B cell (primary cell): ENCODE measurements at regions of chr16 and their contacts with region 1.

Region 1: GRCh38 chr16:2016407-2016922 is 3.1 kb upstream of the NPW start:
- DNase-seq: no peak
- ATAC-seq: no peak
- H3K4me3 ChIP-seq: no peak overlapping the region
- H3K4me3 Mint-ChIP-seq: no peak overlapping the region
- H3K27ac ChIP-seq: no peak overlapping the region
- H3K27ac Mint-ChIP-seq: no peak overlapping the region
- H3K4me1 ChIP-seq: peaks cover 8 to 17% of the 10 kb centered on the region in 2 donors
- H3K4me1 Mint-ChIP-seq: peaks cover 2% of the 10 kb centered on the region
- H3K27me3 ChIP-seq: peaks cover 0 to 31% (median 9%) of the 10 kb centered on the region in 4 experiments
- H3K27me3 Mint-ChIP-seq: peaks cover 15% of the 10 kb centered on the region
- CTCF ChIP-seq: peak; percentile 51

Region 2: DNA sequence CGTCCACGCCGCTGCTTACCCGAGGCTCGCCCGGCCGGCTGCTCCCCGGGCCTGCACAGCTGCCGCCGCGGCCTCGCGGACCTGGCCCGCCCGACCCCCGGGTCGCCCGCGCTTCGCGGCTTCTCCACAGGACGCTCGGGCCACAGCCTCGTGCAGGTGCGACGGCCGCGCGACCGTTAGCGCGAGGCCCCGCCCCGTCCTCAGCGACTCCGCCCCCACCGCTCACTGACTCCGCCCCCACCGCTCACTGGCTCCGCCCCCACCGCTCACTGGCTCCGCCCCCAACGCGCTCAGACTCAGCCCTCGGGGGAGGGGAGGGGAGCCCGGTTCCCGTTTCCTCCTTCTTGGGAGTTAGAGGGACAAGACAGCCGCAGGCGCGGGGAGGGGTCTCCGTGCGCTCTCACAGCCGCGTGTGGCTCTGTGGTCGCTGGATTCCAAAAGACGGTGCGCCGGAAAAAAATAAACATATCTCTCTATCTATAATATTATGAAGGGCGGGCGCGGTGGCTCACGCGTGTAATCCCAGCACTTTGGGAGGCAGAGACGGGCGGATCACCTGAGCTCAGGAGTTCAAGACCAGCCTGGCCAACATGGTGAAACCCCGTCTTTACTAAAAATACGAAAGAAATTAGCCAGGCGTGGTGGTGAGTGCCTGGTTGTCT is 144.4 kb before region 1 on chr16 and contains the start of gene MEIOB:
- CTCF ChIA-PET with region 1: no interaction called
- POLR2A ChIA-PET with region 1: no interaction called
- intact Hi-C with region 1: no loop called
- DNase-seq: peak; percentile 48
- ATAC-seq: peak; percentile 24
- H3K4me3 ChIP-seq: peak within 1 kb of the TSS in 1 of 5 experiments; percentile 14
- H3K4me3 Mint-ChIP-seq: no peak within 1 kb of the TSS
- H3K27ac ChIP-seq: no peak within 1 kb of the TSS
- H3K27ac Mint-ChIP-seq: no peak within 1 kb of the TSS
- H3K4me1 ChIP-seq: peaks cover 0 to 8% of the 10 kb centered on the region in 2 donors
- H3K4me1 Mint-ChIP-seq: no peaks in the 10 kb centered on the region
- H3K27me3 ChIP-seq: peaks cover 0 to 21% (median 5%) of the 10 kb centered on the region in 4 experiments
- H3K27me3 Mint-ChIP-seq: peaks cover 14% of the 10 kb centered on the region
- CTCF ChIP-seq: no peak
- total RNA-seq, gene MEIOB: not detected in 2 replicates

Region 3: GRCh38 chr16:1971796-1972489 is 44.5 kb before region 1 on chr16 and contains the start of gene TBL3:
- CTCF ChIA-PET with region 1: no interaction called
- POLR2A ChIA-PET with region 1: no interaction called
- intact Hi-C with region 1: no loop called
- DNase-seq: peak; percentile 98
- ATAC-seq: peak; percentile 98
- H3K4me3 ChIP-seq: peak within 1 kb of the TSS; percentile 86 to 91 (median 87)
- H3K4me3 Mint-ChIP-seq: peak within 1 kb of the TSS; percentile 96
- H3K27ac ChIP-seq: peak within 1 kb of the TSS; percentile 82 to 85
- H3K27ac Mint-ChIP-seq: peak within 1 kb of the TSS; percentile 98
- H3K4me1 ChIP-seq: peaks cover 9 to 19% of the 10 kb centered on the region in 2 donors
- H3K4me1 Mint-ChIP-seq: peaks cover 21% of the 10 kb centered on the region
- H3K27me3 ChIP-seq: peaks cover 0 to 12% (median 1%) of the 10 kb centered on the region in 4 experiments
- H3K27me3 Mint-ChIP-seq: no peaks in the 10 kb centered on the region
- CTCF ChIP-seq: no peak
- total RNA-seq, gene TBL3: 31.9 and 32.2 TPM in 2 replicates

Region 4: GRCh38 chr16:1991948-1992703 is 24.3 kb before region 1 on chr16:
- CTCF ChIA-PET with region 1: no interaction called
- POLR2A ChIA-PET with region 1: no interaction called
- intact Hi-C with region 1: no loop called
- DNase-seq: peak; percentile 96
- ATAC-seq: peak; percentile 77
- H3K4me3 ChIP-seq: peak overlapping the region in 4 of 5 experiments; percentile 51 to 93 (median 69)
- H3K4me3 Mint-ChIP-seq: peak overlapping the region; percentile 91
- H3K27ac ChIP-seq: peak overlapping the region; percentile 86 to 92
- H3K27ac Mint-ChIP-seq: peak overlapping the region; percentile 97
- H3K4me1 ChIP-seq: peaks cover 24 to 35% of the 10 kb centered on the region in 2 donors
- H3K4me1 Mint-ChIP-seq: peaks cover 33% of the 10 kb centered on the region
- H3K27me3 ChIP-seq: no peaks in the 10 kb centered on the region
- H3K27me3 Mint-ChIP-seq: no peaks in the 10 kb centered on the region
- CTCF ChIP-seq: no peak

Region 5: GRCh38 chr16:2003827-2004641 is 12.4 kb before region 1 on chr16:
- CTCF ChIA-PET with region 1: interaction called, 10 read pairs
- POLR2A ChIA-PET with region 1: interaction called, 5 read pairs
- intact Hi-C with region 1: no loop called
- DNase-seq: peak; percentile 88
- ATAC-seq: peak; percentile 99
- H3K4me3 ChIP-seq: no peak overlapping the region
- H3K4me3 Mint-ChIP-seq: no peak overlapping the region
- H3K27ac ChIP-seq: no peak overlapping the region
- H3K27ac Mint-ChIP-seq: no peak overlapping the region
- H3K4me1 ChIP-seq: peaks cover 33 to 45% of the 10 kb centered on the region in 2 donors
- H3K4me1 Mint-ChIP-seq: peaks cover 41% of the 10 kb centered on the region
- H3K27me3 ChIP-seq: no peaks in the 10 kb centered on the region
- H3K27me3 Mint-ChIP-seq: no peaks in the 10 kb centered on the region
- CTCF ChIP-seq: peak; percentile 93

Region 6: DNA sequence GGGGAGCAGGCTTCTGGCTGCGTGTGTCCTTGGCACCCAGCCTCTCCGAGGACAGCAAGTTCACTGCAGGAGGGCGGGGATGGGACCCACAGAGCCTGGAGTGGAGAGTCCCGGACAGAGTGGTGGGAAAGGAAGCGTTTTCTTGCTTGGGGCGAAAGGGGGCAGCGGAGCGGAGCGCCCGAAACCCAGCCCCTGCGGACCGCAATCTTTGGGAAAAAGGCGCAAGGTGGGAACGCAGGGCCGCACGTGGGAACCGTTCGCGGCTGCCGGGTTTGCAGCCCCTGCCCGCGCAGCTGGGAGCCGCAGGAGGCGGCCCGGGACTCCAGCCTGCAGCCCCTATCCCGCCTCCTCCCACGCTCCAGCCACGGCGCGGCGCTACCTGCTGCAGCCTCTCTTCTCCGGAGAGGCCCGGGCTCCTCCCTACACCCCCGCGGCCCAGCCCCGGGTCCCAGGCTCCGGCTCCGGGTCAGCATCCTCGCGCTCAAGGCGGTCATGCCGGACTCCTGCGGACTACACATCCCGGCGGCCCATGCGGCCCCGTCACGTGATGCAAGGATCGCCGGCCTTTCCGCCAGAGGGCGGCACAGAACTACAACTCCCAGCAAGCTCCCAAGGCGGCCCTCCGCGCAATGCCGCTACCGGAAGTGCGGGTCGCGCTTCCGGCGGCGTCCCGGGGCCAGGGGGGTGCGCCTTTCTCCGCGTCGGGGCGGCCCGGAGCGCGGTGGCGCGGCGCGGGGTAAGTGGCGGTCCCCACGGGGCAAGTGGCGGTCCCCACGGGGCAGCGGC is 31.1 kb after region 1 on chr16 and contains the starts of genes NTHL1 and TSC2:
- CTCF ChIA-PET with region 1: no interaction called
- POLR2A ChIA-PET with region 1: no interaction called
- intact Hi-C with region 1: no loop called
- DNase-seq: peak; percentile 95
- ATAC-seq: peak; percentile 97
- H3K4me3 ChIP-seq: peak within 1 kb of the TSS; percentile 27 to 79 (median 78)
- H3K4me3 Mint-ChIP-seq: peak within 1 kb of the TSS; percentile 91
- H3K27ac ChIP-seq: peak within 1 kb of the TSS in 1 of 2 donors; percentile 63
- H3K27ac Mint-ChIP-seq: peak within 1 kb of the TSS; percentile 76
- H3K4me1 ChIP-seq: peaks cover 17 to 35% of the 10 kb centered on the region in 2 donors
- H3K4me1 Mint-ChIP-seq: peaks cover 20% of the 10 kb centered on the region
- H3K27me3 ChIP-seq: no peaks in the 10 kb centered on the region
- H3K27me3 Mint-ChIP-seq: no peaks in the 10 kb centered on the region
- CTCF ChIP-seq: peak; percentile 26
- total RNA-seq, gene NTHL1: 14.1 and 17.5 TPM in 2 replicates
- total RNA-seq, gene TSC2: 188 and 194 TPM in 2 replicates

Region 7: DNA sequence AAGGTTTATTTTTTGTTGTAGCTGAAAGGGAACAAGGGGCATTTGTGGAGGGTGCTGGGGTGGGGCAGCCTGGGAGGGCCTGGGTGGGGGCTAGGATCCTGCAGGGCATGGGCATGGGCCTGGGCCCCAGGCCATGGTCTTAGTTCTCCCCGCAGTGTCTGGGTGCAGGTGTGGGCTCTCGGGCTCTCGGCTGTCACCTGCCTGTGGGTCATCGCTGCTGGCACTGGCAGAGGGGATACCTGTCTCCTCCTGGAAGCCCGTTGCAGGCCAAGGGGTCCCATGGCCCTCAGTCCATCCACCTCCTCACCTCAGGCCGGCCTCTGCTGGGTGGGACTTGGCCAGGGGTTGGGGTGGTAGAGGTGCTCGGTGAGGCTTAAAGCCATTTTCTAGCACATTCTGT is 61.6 kb after region 1 on chr16:
- CTCF ChIA-PET with region 1: no interaction called
- POLR2A ChIA-PET with region 1: interaction called, 14 read pairs
- intact Hi-C with region 1: no loop called
- DNase-seq: no peak
- ATAC-seq: no peak
- H3K4me3 ChIP-seq: no peak overlapping the region
- H3K4me3 Mint-ChIP-seq: no peak overlapping the region
- H3K27ac ChIP-seq: no peak overlapping the region
- H3K27ac Mint-ChIP-seq: no peak overlapping the region
- H3K4me1 ChIP-seq: no peaks in the 10 kb centered on the region
- H3K4me1 Mint-ChIP-seq: no peaks in the 10 kb centered on the region
- H3K27me3 ChIP-seq: no peaks in the 10 kb centered on the region
- H3K27me3 Mint-ChIP-seq: no peaks in the 10 kb centered on the region
- CTCF ChIP-seq: no peak